ENCODE measurements at regions of chr3 and their contacts with region 1.

Region 1: GRCh38 chr3:32467333-32468070 is 35.1 kb downstream of the CMTM6 start:
- DNase-seq: peak; percentile 78
- ATAC-seq: peak; percentile 94
- H3K4me3 Mint-ChIP-seq: peak overlapping the region; percentile 9
- H3K27ac Mint-ChIP-seq: no peak overlapping the region
- H3K4me1 Mint-ChIP-seq: peaks cover 38% of the 10 kb centered on the region
- H3K27me3 Mint-ChIP-seq: no peaks in the 10 kb centered on the region

Region 2: DNA sequence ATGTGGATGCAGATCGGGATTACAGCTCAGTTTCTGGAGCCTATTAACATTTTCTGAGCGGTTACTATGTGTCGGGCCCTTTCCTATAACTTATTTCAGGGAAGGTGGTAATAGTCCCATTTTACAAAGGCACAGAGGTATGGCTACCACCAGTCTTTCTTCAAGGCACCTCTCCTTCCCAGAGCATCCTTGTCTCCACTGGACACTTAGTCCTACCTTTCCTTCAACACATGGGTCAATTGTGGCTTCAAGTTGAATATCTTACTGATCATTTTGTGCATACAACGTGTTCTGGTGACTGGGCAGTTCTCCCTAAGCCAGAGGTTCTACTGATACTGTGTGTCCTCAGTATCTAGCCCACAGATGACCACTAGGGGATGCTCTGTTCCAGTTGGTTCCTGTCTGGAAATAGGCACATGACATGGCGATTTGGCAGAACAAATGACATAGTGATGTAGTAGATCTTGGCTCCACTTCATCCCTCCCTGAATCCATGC is 289.8 kb before region 1 on chr3:
- CTCF ChIA-PET with region 1: interaction called, 12 read pairs
- DNase-seq: peak; percentile 68
- ATAC-seq: peak; percentile 79
- H3K4me3 Mint-ChIP-seq: peak overlapping the region; percentile 13
- H3K27ac Mint-ChIP-seq: no peak overlapping the region
- H3K4me1 Mint-ChIP-seq: peaks cover 11% of the 10 kb centered on the region
- H3K27me3 Mint-ChIP-seq: peaks cover 2% of the 10 kb centered on the region

Region 3: DNA sequence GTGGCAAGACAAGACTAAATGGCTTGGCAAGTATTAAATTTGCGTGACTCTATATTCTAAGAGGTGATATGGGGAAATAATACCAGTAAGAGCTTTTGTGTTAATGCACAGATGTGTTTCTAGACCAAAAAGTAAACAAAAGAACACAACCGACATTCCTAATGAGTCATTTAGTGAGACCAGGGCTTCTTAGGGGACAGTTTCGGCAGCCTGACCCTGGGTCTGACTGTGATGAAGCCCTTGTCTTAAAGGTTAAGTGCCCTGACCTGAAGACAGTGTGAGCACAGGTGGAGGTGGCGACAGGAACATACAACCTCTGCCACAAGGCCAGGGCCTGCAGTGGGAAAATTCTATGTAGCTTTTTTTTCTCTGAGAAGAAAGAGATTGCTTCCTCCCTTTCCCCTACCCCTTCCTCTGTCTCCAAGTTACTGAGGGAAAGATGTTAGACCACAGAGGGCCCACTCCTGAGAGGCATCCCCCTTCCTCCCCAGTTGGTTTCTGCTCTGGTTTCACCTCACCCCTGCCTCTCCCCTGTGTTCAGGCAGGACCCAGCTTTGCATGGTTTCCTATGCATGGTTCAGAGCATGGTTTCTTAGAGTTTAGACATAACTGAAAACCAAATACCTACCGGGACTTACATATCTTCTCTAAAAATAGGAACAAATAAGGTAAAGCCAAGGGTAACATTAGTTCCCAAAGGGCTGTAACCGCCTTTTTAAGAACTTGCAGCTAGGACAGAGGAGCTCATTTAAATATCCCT is 100.7 kb before region 1 on chr3:
- CTCF ChIA-PET with region 1: interaction called, 114 read pairs
- DNase-seq: no peak
- ATAC-seq: no peak
- H3K4me3 Mint-ChIP-seq: no peak overlapping the region
- H3K27ac Mint-ChIP-seq: peak overlapping the region; percentile 39
- H3K4me1 Mint-ChIP-seq: peaks cover 27% of the 10 kb centered on the region
- H3K27me3 Mint-ChIP-seq: no peaks in the 10 kb centered on the region

Region 4: DNA sequence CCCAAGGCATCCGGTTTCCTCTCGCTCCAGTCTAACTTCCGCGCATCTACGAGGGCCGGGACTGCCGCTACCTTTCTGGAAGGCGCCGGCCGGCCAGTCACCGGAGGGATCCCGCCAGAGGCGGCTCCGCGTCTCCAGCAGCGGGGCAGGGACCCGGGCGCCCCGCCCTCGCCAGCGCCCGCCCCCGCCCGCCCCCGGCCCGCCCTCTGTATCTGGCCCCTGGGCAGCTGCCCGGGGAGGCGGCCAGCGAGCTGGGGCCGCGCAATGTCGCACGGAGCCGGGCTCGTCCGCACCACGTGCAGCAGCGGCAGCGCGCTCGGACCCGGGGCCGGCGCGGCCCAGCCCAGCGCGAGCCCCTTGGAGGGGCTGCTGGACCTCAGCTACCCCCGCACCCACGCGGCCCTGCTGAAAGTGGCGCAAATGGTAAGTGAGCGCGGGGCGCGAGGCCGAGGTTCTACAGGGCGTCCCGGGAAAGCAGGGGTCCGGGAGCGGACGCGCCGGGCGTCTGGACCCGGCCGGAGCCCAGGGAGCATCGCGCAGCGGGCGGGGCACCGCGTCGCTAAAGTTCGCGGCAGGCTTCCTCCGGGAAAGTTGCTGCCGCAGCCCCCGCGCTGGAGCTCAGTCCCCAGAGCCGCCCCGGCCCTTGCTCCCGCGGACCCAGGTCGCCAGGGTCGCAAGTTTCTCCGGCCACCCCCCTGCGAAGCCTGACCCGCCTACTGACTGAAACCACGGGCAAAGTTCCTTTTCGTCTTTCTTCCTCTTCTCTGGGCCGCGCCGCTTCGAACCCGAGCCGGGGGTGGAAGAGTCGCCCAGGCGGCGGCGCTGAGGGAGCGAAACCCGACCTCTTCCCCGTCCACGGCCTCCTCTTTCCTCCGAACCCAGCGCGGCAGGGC is 75.6 kb before region 1 on chr3 and contains the start of gene CMTM7:
- CTCF ChIA-PET with region 1: interaction called, 42 read pairs
- DNase-seq: peak; percentile 80
- ATAC-seq: peak; percentile 83
- H3K4me3 Mint-ChIP-seq: peak within 1 kb of the TSS; percentile 95
- H3K27ac Mint-ChIP-seq: peak within 1 kb of the TSS; percentile 93
- H3K4me1 Mint-ChIP-seq: peaks cover 55% of the 10 kb centered on the region
- H3K27me3 Mint-ChIP-seq: no peaks in the 10 kb centered on the region
- total RNA-seq, gene CMTM7: 42.6 to 49.8 TPM

Region 5: DNA sequence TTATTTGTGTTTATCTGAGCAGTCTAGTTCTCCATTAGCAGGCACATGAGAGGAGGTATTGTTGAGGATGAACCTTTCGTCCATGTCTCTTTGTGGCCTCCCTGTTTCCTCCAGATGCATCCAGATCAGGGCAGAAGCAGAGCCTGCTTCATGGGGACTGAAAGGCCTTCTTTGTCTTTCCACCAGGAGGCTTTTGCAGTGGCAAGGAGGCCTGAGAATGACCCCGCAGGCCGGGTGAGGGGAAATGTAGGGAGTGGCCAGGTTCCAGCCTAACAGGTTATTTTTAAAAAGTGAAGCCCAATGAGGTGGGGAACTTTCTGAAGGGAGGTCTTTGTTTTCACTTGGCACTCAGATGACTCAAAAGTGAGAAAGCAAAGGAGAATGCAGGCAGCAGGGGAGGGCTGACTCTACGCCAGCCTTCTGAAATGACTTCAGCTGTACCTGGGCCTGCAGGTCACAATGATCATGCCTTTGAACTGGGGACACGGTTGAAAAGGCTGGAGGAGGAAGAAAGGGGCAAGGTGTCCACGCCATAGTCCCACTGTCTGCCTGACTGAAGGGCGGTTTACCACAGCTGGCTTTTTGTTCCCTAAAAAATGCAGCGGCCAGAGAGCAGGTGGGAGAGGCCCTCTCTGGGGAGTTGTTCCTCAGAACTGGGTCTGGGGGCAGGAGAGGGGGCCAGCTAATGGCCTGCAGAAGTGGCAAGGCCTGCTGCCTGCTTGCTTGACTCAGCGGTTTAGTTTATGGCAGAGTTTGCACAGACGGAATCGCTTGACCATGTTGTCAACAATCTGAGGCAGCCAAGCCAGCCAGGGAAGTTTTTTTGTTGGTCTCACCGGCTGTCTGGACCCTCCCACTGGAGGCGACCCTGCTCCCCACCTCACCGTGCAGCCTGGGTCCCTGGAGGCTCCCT is 47.1 kb before region 1 on chr3:
- CTCF ChIA-PET with region 1: interaction called, 40 read pairs
- DNase-seq: peak; percentile 65
- ATAC-seq: peak; percentile 51
- H3K4me3 Mint-ChIP-seq: peak overlapping the region; percentile 52
- H3K27ac Mint-ChIP-seq: peak overlapping the region; percentile 92
- H3K4me1 Mint-ChIP-seq: peaks cover 87% of the 10 kb centered on the region
- H3K27me3 Mint-ChIP-seq: no peaks in the 10 kb centered on the region

Region 6: DNA sequence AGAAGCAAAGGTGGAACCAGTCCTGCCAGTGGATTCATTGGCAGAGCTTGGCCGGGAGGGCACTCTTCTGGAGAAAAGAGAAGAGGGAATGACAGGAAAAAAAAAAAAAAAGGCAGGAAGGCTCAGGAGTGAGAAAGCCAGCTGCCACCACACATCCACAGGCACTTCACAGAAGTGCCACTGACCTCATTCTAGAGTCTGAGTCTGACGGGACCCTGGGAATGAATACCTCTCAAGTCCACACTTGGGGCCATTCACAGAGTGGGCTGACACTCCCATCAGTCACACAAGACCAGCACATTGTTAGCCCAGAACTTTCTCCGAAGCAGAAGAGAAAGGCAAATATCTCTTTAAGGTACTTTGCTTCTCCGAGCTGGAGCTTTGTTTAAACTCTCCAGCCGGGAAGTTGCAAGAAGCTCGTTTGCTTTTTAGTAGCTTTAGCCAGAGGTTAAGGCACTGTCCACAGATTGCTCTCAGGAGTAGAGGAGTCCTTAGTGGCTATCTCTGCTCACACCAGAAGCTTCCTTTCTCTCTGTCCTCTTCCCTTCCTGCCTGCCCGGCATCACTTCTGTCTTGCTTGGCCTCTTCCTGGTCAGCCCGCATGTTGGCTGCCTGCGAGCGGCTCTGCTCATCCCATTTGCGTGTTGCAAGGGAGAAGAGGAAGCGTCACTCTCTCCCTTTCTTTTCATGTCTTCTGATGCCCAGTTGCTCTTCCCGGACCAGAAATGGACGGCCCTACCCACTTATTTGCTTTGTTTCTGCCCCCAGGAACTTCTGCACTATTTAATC is 18.6 kb before region 1 on chr3:
- CTCF ChIA-PET with region 1: interaction called, 35 read pairs
- DNase-seq: no peak
- ATAC-seq: no peak
- H3K4me3 Mint-ChIP-seq: no peak overlapping the region
- H3K27ac Mint-ChIP-seq: no peak overlapping the region
- H3K4me1 Mint-ChIP-seq: peaks cover 11% of the 10 kb centered on the region
- H3K27me3 Mint-ChIP-seq: no peaks in the 10 kb centered on the region

Measured in activated CD8-positive, alpha-beta memory T cell treated with anti-CD3 and anti-CD28 coated beads, Interleukin-2, amount 10 ng/mL, durations not matched to agents 7 days and 5 days (primary cell).